GM12878 (cell line): ENCODE measurements at regions of chr11 and their contacts with region 1.

Region 1: GRCh38 chr11:121334973-121335710 is 42.6 kb downstream of the SC5D start:
- DNase-seq: no peak
- ATAC-seq: no peak
- H3K4me3 ChIP-seq: no peak overlapping the region
- H3K27ac ChIP-seq: no peak overlapping the region
- H3K4me1 ChIP-seq: peaks cover 49% of the 10 kb centered on the region
- H3K27me3 ChIP-seq: no peaks in the 10 kb centered on the region
- CTCF ChIP-seq: peak in 1 of 3 experiments; percentile 9; a peak in 1 of 6 replicates
- EP300 ChIP-seq: no peak
- POLR2A ChIP-seq: no peak
- RAD21 ChIP-seq: no peak

Region 2: DNA sequence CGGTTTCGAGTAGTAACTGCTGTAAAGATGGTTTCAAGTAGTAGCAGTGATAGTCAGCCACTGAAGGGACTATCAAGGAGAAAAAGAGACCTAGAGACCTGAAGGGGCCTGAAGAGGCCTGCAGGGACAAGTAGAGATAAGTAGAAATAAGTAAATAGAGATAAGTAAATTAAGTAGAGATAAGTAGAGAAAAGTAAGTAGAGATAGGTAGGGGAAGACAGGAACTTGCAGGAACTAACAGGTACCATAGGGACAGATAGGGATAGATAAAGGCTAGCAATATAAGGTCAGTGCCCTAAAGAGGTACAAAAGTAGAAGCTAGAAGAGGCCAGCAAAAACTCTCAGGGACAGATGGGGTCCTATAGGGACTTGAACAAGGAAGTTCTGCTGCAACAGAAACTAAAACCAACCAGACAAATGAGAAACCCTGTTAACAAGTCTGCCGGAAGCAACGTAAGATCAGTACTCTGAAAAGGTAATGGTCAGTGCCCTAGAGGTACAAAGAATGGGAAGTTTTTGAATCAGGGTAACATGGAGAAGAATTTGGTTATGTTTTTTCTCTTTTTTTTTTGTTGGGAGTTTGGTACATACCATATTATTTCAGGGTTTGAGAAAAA is 52.1 kb before region 1 on chr11:
- CTCF ChIA-PET with region 1: no interaction called
- POLR2A ChIA-PET with region 1: no interaction called
- RAD21 ChIA-PET with region 1: no interaction called
- SMC1A ChIA-PET with region 1: no interaction called
- in situ Hi-C with region 1: no loop called
- intact Hi-C with region 1: no loop called
- DNase-seq: no peak
- ATAC-seq: peak; percentile 98
- H3K4me3 ChIP-seq: no peak overlapping the region
- H3K27ac ChIP-seq: peak overlapping the region; percentile 24; the same call in 1 of the 2 replicates
- H3K4me1 ChIP-seq: peaks cover 7% of the 10 kb centered on the region
- H3K27me3 ChIP-seq: no peaks in the 10 kb centered on the region
- CTCF ChIP-seq: no peak
- EP300 ChIP-seq: no peak
- POLR2A ChIP-seq: no peak
- RAD21 ChIP-seq: no peak

Region 3: GRCh38 chr11:121318848-121319834 is 16.0 kb before region 1 on chr11:
- CTCF ChIA-PET with region 1: interaction called, 24 read pairs
- POLR2A ChIA-PET with region 1: no interaction called
- RAD21 ChIA-PET with region 1: interaction called, 6 read pairs
- SMC1A ChIA-PET with region 1: interaction called, 24 read pairs
- in situ Hi-C with region 1: no loop called
- intact Hi-C with region 1: no loop called
- DNase-seq: no peak
- ATAC-seq: peak; percentile 84
- H3K4me3 ChIP-seq: no peak overlapping the region
- H3K27ac ChIP-seq: no peak overlapping the region
- H3K4me1 ChIP-seq: peaks cover 4% of the 10 kb centered on the region; the same call in 1 of the 2 replicates
- H3K27me3 ChIP-seq: no peaks in the 10 kb centered on the region
- CTCF ChIP-seq: peak; percentile 75 to 88 (median 86)
- EP300 ChIP-seq: no peak
- POLR2A ChIP-seq: no peak
- RAD21 ChIP-seq: peak; percentile 93

Region 4: GRCh38 chr11:121372671-121373429 is 37.7 kb after region 1 on chr11:
- CTCF ChIA-PET with region 1: interaction called, 26 read pairs
- POLR2A ChIA-PET with region 1: interaction called, 70 read pairs
- RAD21 ChIA-PET with region 1: interaction called, 92 read pairs
- SMC1A ChIA-PET with region 1: interaction called, 338 read pairs
- in situ Hi-C with region 1: no loop called
- intact Hi-C with region 1: no loop called
- DNase-seq: peak; percentile 82
- ATAC-seq: peak; percentile 89
- H3K4me3 ChIP-seq: peak overlapping the region; percentile 46; the same call in 1 of the 2 replicates
- H3K27ac ChIP-seq: peak overlapping the region; percentile 80
- H3K4me1 ChIP-seq: peaks cover 53% of the 10 kb centered on the region
- H3K27me3 ChIP-seq: no peaks in the 10 kb centered on the region
- CTCF ChIP-seq: no peak
- EP300 ChIP-seq: no peak
- POLR2A ChIP-seq: peak; percentile 69
- RAD21 ChIP-seq: 0 out of 2 replicates have a peak, but pooled peaks have one; percentile 4

Region 5: GRCh38 chr11:121417055-121417551 is 82.0 kb after region 1 on chr11:
- CTCF ChIA-PET with region 1: interaction called, 4 read pairs
- POLR2A ChIA-PET with region 1: interaction called, 9 read pairs
- RAD21 ChIA-PET with region 1: interaction called, 6 read pairs
- SMC1A ChIA-PET with region 1: interaction called, 14 read pairs
- in situ Hi-C with region 1: no loop called
- intact Hi-C with region 1: loop called (anchors 5 kb)
- DNase-seq: peak; percentile 92
- ATAC-seq: peak; percentile 87
- H3K4me3 ChIP-seq: no peak overlapping the region
- H3K27ac ChIP-seq: peak overlapping the region; percentile 9; the same call in 1 of the 2 replicates
- H3K4me1 ChIP-seq: peaks cover 45% of the 10 kb centered on the region
- H3K27me3 ChIP-seq: no peaks in the 10 kb centered on the region
- CTCF ChIP-seq: no peak
- EP300 ChIP-seq: peak; percentile 26 to 71; a peak in 2 of 4 replicates
- POLR2A ChIP-seq: no peak
- RAD21 ChIP-seq: no peak

Region 6: GRCh38 chr11:121446752-121447156 is 111.6 kb after region 1 on chr11:
- CTCF ChIA-PET with region 1: interaction called, 14 read pairs
- POLR2A ChIA-PET with region 1: interaction called, 18 read pairs
- RAD21 ChIA-PET with region 1: interaction called, 29 read pairs
- SMC1A ChIA-PET with region 1: interaction called, 55 read pairs
- in situ Hi-C with region 1: no loop called
- intact Hi-C with region 1: loop called (anchors 5 kb)
- DNase-seq: no peak
- ATAC-seq: peak; percentile 42
- H3K4me3 ChIP-seq: no peak overlapping the region
- H3K27ac ChIP-seq: peak overlapping the region; percentile 76
- H3K4me1 ChIP-seq: peaks cover 59% of the 10 kb centered on the region
- H3K27me3 ChIP-seq: no peaks in the 10 kb centered on the region
- CTCF ChIP-seq: peak in 2 of 3 experiments; percentile 19 to 37; a peak in 4 of 6 replicates
- EP300 ChIP-seq: no peak
- POLR2A ChIP-seq: no peak
- RAD21 ChIP-seq: peak; percentile 48

Region 7: GRCh38 chr11:121544956-121545355 is 209.8 kb after region 1 on chr11:
- CTCF ChIA-PET with region 1: no interaction called
- POLR2A ChIA-PET with region 1: no interaction called
- RAD21 ChIA-PET with region 1: no interaction called
- SMC1A ChIA-PET with region 1: no interaction called
- in situ Hi-C with region 1: no loop called
- intact Hi-C with region 1: no loop called
- DNase-seq: no peak
- ATAC-seq: no peak
- H3K4me3 ChIP-seq: no peak overlapping the region
- H3K27ac ChIP-seq: 0 out of 2 replicates have a peak overlapping the region, but pooled peaks have one; percentile 14
- H3K4me1 ChIP-seq: peaks cover 29% of the 10 kb centered on the region
- H3K27me3 ChIP-seq: no peaks in the 10 kb centered on the region
- CTCF ChIP-seq: no peak
- EP300 ChIP-seq: no peak
- POLR2A ChIP-seq: no peak
- RAD21 ChIP-seq: no peak